SK-N-SH (cell line): ENCODE measurements at regions of chr4 and their contacts with region 1.

Region 1: GRCh38 chr4:183600189-183600685 is 58.7 kb downstream of the RWDD4 start:
- DNase-seq: no peak
- H3K4me3 ChIP-seq: no peak overlapping the region
- H3K27ac ChIP-seq: no peak overlapping the region
- H3K4me1 ChIP-seq: peaks cover 0 to 7% of the 10 kb centered on the region in 2 experiments; a peak in 2 of 4 replicates
- H3K27me3 ChIP-seq: no peaks in the 10 kb centered on the region
- CTCF ChIP-seq: peak; percentile 54
- EP300 ChIP-seq: no peak
- RAD21 ChIP-seq: peak; percentile 33

Region 2: GRCh38 chr4:183407128-183407585 is 193.1 kb before region 1 on chr4:
- CTCF ChIA-PET with region 1: no interaction called
- POLR2A ChIA-PET with region 1: no interaction called
- DNase-seq: peak; percentile 92
- H3K4me3 ChIP-seq: peak overlapping the region; percentile 52 to 74
- H3K27ac ChIP-seq: peak overlapping the region; percentile 70 to 86
- H3K4me1 ChIP-seq: peaks cover 0 to 13% of the 10 kb centered on the region in 2 experiments; a peak in 1 of 4 replicates
- H3K27me3 ChIP-seq: no peaks in the 10 kb centered on the region
- CTCF ChIP-seq: peak; percentile 93
- EP300 ChIP-seq: no peak
- RAD21 ChIP-seq: peak; percentile 78

Region 3: DNA sequence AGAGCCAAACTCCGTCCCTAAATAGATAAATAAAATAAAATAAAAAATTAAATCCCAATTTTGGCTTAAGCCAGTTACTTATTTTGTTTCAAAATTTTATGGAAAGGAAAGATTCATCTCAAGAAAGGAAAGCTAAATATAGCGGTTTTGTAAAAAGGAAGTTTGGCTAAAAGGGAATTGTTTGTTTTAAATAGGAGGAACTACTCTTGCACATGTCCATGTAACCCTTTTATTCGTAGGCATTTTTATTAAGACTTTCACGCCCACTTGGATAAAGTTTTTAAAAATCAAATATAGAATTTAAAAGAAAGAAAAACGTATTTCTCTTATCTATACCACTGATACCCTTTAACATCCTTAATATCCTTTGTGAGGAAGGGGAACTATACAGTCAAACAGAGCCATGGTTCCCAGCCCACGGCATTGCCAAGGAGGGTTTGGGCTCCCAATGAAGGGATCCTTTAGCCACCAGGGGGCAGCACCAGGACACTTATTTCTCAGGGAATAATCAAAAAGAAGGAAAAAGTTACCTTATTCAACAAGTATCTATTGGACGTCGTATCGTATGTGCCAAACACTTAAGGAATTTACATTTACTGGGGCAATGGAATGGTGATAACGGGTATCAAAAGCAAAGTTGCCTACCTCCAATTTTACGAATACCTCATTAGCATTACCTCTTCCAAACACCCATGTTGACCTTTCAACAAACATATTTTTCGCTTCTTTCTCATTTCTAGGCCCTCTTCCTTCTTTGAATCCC is 128.1 kb before region 1 on chr4:
- CTCF ChIA-PET with region 1: interaction called, 11 read pairs
- POLR2A ChIA-PET with region 1: no interaction called
- DNase-seq: peak; percentile 83
- H3K4me3 ChIP-seq: no peak overlapping the region; a peak in 1 of 4 replicates
- H3K27ac ChIP-seq: no peak overlapping the region
- H3K4me1 ChIP-seq: no peaks in the 10 kb centered on the region
- H3K27me3 ChIP-seq: no peaks in the 10 kb centered on the region
- CTCF ChIP-seq: peak; percentile 91
- EP300 ChIP-seq: no peak
- RAD21 ChIP-seq: peak; percentile 85

Region 4: GRCh38 chr4:183504064-183504929 is 95.9 kb before region 1 on chr4:
- CTCF ChIA-PET with region 1: interaction called, 12 read pairs
- POLR2A ChIA-PET with region 1: interaction called, 4 read pairs
- DNase-seq: peak; percentile 96
- H3K4me3 ChIP-seq: peak overlapping the region; percentile 89 to 96
- H3K27ac ChIP-seq: peak overlapping the region; percentile 97 to 98
- H3K4me1 ChIP-seq: peaks cover 4 to 9% of the 10 kb centered on the region in 2 experiments; a peak in 3 of 4 replicates
- H3K27me3 ChIP-seq: no peaks in the 10 kb centered on the region
- CTCF ChIP-seq: no peak
- EP300 ChIP-seq: peak in 1 of 2 experiments; percentile 23; a peak in 2 of 4 replicates
- RAD21 ChIP-seq: peak; percentile 57

Region 5: GRCh38 chr4:183773790-183774189 is 173.6 kb after region 1 on chr4:
- CTCF ChIA-PET with region 1: no interaction called
- POLR2A ChIA-PET with region 1: no interaction called
- DNase-seq: no peak
- H3K4me3 ChIP-seq: no peak overlapping the region
- H3K27ac ChIP-seq: no peak overlapping the region
- H3K4me1 ChIP-seq: peaks cover 0 to 7% of the 10 kb centered on the region in 2 experiments; a peak in 1 of 4 replicates
- H3K27me3 ChIP-seq: no peaks in the 10 kb centered on the region
- CTCF ChIP-seq: no peak
- EP300 ChIP-seq: no peak
- RAD21 ChIP-seq: no peak